H1 (cell line): ENCODE measurements at regions of chr3 and their contacts with region 1.

Region 1: DNA sequence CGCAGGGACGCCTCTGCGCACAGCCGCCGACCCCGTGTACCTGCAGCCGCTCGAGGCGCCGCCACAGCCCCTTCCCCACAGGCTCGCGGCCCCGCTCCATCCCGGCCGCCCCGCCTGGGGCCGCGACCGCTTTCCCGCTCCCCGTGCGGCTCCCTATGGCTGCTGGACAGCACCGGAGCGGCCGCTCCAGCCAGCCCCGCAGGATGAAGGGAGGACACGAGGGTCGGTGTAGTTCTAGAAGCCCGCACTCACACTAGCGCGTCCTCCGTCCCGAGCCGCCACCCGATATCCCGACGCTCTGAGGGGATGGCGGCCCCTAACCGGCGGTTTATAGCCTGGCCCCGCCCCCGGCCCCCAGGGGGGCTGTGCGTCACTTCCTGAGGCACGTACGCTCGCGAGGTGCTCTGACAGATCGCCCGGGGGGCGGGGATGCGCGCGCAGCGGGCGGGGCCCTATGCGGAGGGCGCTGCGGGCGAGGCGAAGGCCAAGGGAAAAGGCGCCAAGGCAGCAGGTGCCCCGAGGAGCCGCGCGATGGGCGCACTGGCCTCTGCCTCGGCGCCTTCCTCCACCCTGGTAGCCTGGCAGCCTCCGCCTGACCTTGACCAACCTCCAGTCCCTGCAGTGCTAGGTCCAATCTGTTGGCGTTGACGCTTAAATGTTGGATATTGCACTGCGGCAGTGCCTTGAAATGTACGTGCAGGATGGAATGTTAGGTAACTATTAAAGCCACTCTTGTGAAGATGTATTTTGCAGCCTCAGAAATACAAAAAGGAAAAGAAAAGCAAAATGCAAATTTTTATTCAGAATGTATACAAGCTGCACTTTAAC is at the start of gene TFRC:
- DNase-seq: peak; percentile 82 to 98
- H3K4me3 ChIP-seq: peak within 1 kb of the TSS; percentile 68 to 93 (median 82)
- H3K27ac ChIP-seq: peak within 1 kb of the TSS; percentile 80
- H3K4me1 ChIP-seq: peaks cover 2 to 10% (median 6%) of the 10 kb centered on the region in 4 experiments; a peak in 6 of 7 replicates
- H3K27me3 ChIP-seq: no peaks in the 10 kb centered on the region; a peak in 1 of 7 replicates
- CTCF ChIP-seq: no peak
- EP300 ChIP-seq: no peak
- POLR2A ChIP-seq: peak; percentile 99
- RAD21 ChIP-seq: no peak
- total RNA-seq, gene TFRC: 146 and 161 TPM in 2 replicates

Region 2: GRCh38 chr3:196016485-196016884 is 65.5 kb before region 1 on chr3:
- CTCF ChIA-PET with region 1: no interaction called
- POLR2A ChIA-PET with region 1: no interaction called
- DNase-seq: no peak
- H3K4me3 ChIP-seq: no peak overlapping the region
- H3K27ac ChIP-seq: no peak overlapping the region
- H3K4me1 ChIP-seq: no peaks in the 10 kb centered on the region
- H3K27me3 ChIP-seq: no peaks in the 10 kb centered on the region
- CTCF ChIP-seq: no peak
- EP300 ChIP-seq: no peak
- POLR2A ChIP-seq: no peak
- RAD21 ChIP-seq: no peak

Region 3: DNA sequence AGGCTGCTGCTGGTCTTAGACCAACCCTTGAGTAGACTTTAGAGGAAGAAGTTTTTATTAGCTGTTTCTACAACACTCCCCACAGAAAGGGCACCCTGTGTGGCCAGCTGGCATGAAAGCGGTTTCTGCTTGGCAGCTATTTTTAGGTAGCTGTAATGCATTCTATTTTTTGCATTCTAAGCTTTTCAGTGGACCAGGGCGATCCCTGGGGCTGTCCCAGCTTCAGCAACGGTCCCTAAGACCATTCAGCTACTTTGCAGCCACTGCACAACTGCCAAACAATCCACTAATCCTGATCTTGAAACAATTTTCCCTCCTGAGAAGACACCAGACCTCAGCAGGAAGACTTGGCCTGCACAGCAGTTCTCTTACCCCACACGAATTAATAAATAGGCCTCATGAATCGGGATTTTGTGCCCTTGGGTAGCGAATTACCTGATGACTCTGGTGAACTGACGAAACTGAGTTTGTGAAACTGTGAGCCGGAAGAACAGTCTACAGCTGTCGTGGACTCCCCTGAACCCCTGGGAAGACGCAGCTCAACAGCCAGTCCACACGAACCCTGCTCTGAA is 14.5 kb after region 1 on chr3:
- CTCF ChIA-PET with region 1: interaction called, 35 read pairs
- POLR2A ChIA-PET with region 1: interaction called, 10 read pairs
- DNase-seq: no peak
- H3K4me3 ChIP-seq: no peak overlapping the region
- H3K27ac ChIP-seq: no peak overlapping the region
- H3K4me1 ChIP-seq: no peaks in the 10 kb centered on the region
- H3K27me3 ChIP-seq: no peaks in the 10 kb centered on the region
- CTCF ChIP-seq: no peak
- EP300 ChIP-seq: no peak
- POLR2A ChIP-seq: no peak
- RAD21 ChIP-seq: no peak

Region 4: DNA sequence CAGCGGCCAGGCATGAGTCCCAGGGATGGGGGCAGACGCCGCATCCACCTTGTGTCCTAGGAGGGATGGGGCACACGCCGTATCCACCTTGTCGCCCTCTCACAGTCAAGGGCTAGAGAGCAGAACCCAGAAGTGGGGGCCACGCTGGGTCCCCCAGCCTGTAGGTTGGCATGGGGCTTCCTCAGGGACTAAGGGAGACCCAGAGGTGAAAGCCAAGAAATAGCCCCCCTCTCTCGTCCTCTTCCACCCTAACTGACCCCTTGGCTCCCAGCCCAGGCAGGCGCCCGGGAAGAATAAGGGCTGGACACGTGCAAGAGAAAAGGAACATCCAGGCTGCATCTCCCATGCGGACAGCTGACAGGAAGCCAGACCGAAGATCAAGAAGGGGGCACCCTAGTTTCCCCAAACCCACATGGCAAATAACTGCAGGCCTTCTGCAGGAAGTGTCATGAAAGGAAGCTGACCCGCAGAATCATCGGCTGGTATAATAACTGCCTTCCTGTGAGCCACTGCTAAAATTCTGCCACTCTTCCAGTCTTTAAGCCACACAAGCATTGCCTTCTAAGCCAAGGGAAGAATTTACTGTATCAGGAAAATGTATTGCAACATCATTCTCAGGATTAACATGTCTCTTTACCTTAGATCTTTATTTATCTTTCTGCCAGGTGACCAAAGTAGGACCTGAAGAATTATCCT is 38.4 kb after region 1 on chr3:
- CTCF ChIA-PET with region 1: no interaction called
- POLR2A ChIA-PET with region 1: no interaction called
- DNase-seq: no peak
- H3K4me3 ChIP-seq: no peak overlapping the region
- H3K27ac ChIP-seq: no peak overlapping the region
- H3K4me1 ChIP-seq: no peaks in the 10 kb centered on the region
- H3K27me3 ChIP-seq: no peaks in the 10 kb centered on the region
- CTCF ChIP-seq: no peak
- EP300 ChIP-seq: no peak
- POLR2A ChIP-seq: no peak
- RAD21 ChIP-seq: no peak

Region 5: GRCh38 chr3:196144706-196145105 is 62.7 kb after region 1 on chr3:
- CTCF ChIA-PET with region 1: no interaction called
- POLR2A ChIA-PET with region 1: no interaction called
- DNase-seq: no peak
- H3K4me3 ChIP-seq: no peak overlapping the region
- H3K27ac ChIP-seq: no peak overlapping the region
- H3K4me1 ChIP-seq: peaks cover 0 to 12% (median 6%) of the 10 kb centered on the region in 4 experiments; a peak in 3 of 7 replicates
- H3K27me3 ChIP-seq: no peaks in the 10 kb centered on the region
- CTCF ChIP-seq: no peak
- EP300 ChIP-seq: no peak
- POLR2A ChIP-seq: no peak
- RAD21 ChIP-seq: no peak

Region 6: DNA sequence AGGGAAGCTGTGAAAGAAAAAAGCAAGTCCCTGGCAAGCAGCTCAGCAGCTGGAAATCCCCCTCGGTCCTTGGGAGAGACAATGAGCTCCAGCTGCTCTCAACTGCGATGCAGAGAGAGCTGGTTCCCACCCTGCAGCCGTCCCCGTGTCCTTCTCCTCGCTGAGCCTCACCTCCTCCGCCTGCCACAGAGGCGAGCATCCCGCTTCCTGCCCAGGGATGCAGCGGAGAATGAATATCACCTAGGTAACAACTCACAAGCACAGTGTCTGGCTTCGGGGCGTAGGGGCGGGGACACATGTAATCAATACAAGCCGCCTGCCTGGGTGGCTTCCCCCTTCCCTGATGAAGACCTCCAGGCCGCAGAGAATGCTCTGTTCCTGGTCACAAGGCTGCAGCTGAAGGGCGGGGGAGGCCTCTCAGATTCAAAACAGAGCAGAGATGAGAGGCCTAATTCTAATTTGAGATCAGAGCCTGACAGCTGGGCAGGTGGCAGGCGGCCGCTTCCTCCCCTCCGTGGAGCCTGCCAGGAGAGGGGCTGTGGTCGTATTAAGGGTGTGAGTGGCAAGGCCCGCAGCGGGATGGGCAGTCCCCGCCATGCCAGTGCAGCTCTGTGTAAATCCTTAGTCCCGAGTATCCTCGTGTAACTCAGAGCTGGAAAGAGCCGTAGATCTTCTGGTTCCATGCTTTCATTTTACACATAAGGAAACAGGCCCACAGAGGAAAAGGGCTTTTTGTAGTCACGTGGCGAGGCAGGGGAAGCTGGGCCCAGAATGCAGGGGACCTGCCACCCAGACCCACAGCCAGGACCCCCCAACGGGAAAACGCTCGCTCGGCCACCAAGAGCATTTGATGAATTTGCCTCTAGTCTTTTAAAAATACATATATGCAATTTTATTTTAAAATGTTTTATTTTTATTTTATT is 104.9 kb after region 1 on chr3:
- CTCF ChIA-PET with region 1: interaction called, 299 read pairs
- POLR2A ChIA-PET with region 1: interaction called, 11 read pairs
- DNase-seq: peak; percentile 56 to 72
- H3K4me3 ChIP-seq: peak overlapping the region in 2 of 4 experiments; percentile 2 to 18; a peak in 3 of 8 replicates
- H3K27ac ChIP-seq: no peak overlapping the region
- H3K4me1 ChIP-seq: peaks cover 0 to 9% (median 6%) of the 10 kb centered on the region in 4 experiments; a peak in 6 of 7 replicates
- H3K27me3 ChIP-seq: no peaks in the 10 kb centered on the region
- CTCF ChIP-seq: no peak
- EP300 ChIP-seq: no peak
- POLR2A ChIP-seq: no peak; a peak in 1 of 3 replicates
- RAD21 ChIP-seq: no peak

Region 7: DNA sequence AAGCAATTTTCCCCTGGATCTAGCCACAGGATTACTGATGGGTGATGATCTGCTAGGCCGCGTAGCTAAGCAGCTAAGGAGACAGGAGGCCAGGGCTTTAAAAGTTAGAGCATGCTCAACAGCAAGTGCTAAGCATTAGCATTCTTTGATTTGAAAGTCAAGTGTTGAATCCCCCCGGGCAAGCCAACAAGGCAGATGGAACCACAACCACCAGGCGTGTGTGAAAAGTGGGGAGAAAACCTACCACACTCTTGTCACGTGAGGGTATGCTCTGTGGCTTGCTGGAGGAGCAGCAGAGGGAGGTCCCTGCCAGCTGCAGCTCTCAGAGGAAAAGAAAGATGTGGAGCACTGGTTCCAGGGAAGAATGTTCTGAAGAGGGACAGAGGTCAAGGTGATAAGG is 155.2 kb after region 1 on chr3:
- CTCF ChIA-PET with region 1: no interaction called
- POLR2A ChIA-PET with region 1: no interaction called
- DNase-seq: no peak
- H3K4me3 ChIP-seq: no peak overlapping the region
- H3K27ac ChIP-seq: no peak overlapping the region
- H3K4me1 ChIP-seq: peaks cover 0 to 3% (median under 1%) of the 10 kb centered on the region in 4 experiments; a peak in 3 of 7 replicates
- H3K27me3 ChIP-seq: no peaks in the 10 kb centered on the region
- CTCF ChIP-seq: no peak
- EP300 ChIP-seq: no peak
- POLR2A ChIP-seq: no peak
- RAD21 ChIP-seq: no peak